T-cell (primary cell): ENCODE measurements at regions of chr1 and their contacts with region 1.

Region 1: GRCh38 chr1:31789259-31790065 is 25.3 kb upstream of the ADGRB2 start:
- DNase-seq: peak; percentile 78 to 98 (median 92)
- ATAC-seq: peak; percentile 76 to 86 (median 86)
- H3K4me3 ChIP-seq: peak overlapping the region in 1 of 2 donors; percentile 61
- H3K4me3 Mint-ChIP-seq: peak overlapping the region; percentile 82 to 89 (median 84)
- H3K27ac ChIP-seq: no peak overlapping the region
- H3K27ac Mint-ChIP-seq: no peak overlapping the region
- H3K4me1 ChIP-seq: peaks cover 0 to 20% of the 10 kb centered on the region in 2 experiments
- H3K4me1 Mint-ChIP-seq: peaks cover 12 to 21% (median 17%) of the 10 kb centered on the region in 3 donors
- H3K27me3 ChIP-seq: peaks cover 0 to 4% of the 10 kb centered on the region in 2 experiments
- H3K27me3 Mint-ChIP-seq: peaks cover 0 to 4% of the 10 kb centered on the region in 2 donors

Region 2: DNA sequence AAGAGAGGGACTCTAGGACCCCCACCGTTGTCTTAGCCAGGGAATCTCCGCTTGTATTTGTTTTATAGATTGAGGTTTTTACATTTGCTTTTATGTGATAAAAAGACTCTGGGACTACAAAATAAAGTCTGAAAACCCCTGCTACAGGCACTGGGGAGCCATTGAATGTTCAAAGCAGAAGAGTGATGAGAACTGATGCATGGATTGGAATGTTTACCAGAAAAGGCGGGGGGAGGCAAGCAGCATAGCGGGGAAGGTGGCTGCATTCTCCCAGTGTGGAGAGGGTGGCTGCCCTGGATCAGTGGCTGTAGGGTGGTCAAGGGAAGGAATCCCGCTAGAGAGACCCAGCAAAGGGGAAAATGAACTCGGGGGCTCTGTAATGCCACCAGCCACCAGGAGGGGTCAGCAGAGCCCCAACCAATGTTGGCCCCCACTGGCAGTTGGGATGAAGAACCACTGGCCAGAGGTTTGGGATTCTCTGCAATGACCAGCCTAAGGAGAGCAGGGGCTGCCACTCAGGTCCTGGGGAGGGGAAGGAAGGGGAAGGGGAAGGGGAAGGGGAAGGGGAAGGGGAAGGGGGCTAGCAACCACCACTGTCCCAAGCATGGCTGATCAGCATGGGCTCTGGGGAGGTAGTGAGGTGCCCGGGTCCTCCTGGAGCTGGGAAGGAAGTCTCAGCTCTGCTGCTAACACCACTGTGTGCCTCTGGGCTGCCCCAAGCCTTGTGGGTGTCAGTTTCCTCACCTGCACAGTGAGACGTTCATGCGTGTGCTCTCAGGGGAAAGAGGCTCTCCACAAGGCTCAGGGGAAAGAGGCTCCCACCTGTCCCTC is 125.6 kb before region 1 on chr1:
- CTCF ChIA-PET with region 1: interaction called in 1 of 2 experiments, 12 read pairs
- POLR2A ChIA-PET with region 1: no interaction called
- DNase-seq: peak in 28 of 35 experiments; percentile 11 to 71 (median 40)
- ATAC-seq: peak in 3 of 4 experiments; percentile 44 to 67 (median 52)
- H3K4me3 ChIP-seq: no peak overlapping the region
- H3K4me3 Mint-ChIP-seq: no peak overlapping the region
- H3K27ac ChIP-seq: no peak overlapping the region
- H3K27ac Mint-ChIP-seq: no peak overlapping the region
- H3K4me1 ChIP-seq: no peaks in the 10 kb centered on the region
- H3K4me1 Mint-ChIP-seq: no peaks in the 10 kb centered on the region
- H3K27me3 ChIP-seq: peaks cover 0 to 43% of the 10 kb centered on the region in 2 experiments
- H3K27me3 Mint-ChIP-seq: peaks cover 2 to 11% of the 10 kb centered on the region in 2 donors

Region 3: DNA sequence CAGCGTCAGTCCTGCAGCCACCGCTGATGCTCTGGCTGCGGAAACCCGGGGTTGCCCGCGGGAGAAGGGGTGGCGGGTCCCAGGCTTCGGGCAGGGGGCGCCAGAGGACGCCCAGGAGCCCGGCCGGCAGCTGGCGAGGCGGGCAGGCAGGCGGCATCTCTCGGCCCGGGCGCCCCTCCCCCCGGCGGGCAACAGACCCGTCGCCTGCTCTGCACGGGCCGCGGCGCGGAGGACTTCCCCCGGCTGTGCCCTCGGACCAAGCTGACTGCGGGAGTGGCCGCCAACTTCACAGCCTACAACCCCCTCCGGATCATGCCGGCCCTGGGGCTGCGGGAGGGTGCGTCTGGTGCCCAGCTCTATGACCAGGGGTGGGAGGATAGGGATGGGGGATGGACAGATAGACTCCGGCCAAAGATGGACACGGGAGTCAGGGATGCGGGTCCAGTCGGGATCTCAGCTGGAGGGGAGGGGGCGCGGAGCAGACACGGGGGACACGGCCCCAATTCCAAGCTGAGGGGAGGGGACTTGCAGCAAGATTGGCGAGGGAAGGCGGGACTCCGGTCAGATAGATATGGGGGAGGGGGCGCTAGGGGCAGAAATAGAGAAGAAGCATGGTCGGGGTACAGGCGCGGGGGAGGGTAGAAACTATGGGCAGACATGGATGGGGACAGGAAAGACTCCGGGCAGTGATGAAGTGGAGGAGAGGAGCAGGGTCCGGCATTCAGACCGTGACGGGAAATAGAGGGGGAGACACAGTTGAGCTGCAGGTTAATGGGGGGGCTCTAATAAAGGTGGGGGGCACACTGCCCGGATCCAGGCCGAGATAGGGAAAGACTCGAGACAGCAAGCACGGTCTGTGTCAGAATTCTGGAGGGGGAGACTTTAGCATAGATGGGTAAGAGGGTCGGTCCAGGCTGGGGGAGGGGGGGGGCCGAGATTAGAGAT is 26.5 kb before region 1 on chr1:
- CTCF ChIA-PET with region 1: interaction called, 4 to 24 read pairs
- POLR2A ChIA-PET with region 1: no interaction called
- DNase-seq: peak in 34 of 35 experiments; percentile 10 to 84 (median 56)
- ATAC-seq: peak; percentile 35 to 59 (median 41)
- H3K4me3 ChIP-seq: peak overlapping the region; percentile 37 to 52
- H3K4me3 Mint-ChIP-seq: peak overlapping the region; percentile 64 to 86 (median 76)
- H3K27ac ChIP-seq: no peak overlapping the region
- H3K27ac Mint-ChIP-seq: no peak overlapping the region
- H3K4me1 ChIP-seq: peaks cover 10 to 46% of the 10 kb centered on the region in 2 experiments
- H3K4me1 Mint-ChIP-seq: peaks cover 6 to 37% (median 24%) of the 10 kb centered on the region in 3 donors
- H3K27me3 ChIP-seq: peaks cover 0 to 41% of the 10 kb centered on the region in 2 experiments
- H3K27me3 Mint-ChIP-seq: peaks cover 0 to 5% of the 10 kb centered on the region in 2 donors